ENCODE measurements at regions of chr14 and their contacts with region 1.

Region 1: GRCh38 chr14:24058260-24058950 is 6.6 kb downstream of the CARMIL3 start:
- DNase-seq: peak; percentile 71 to 78
- ATAC-seq: peak; percentile 88 to 94
- H3K4me3 ChIP-seq: no peak overlapping the region
- H3K27ac ChIP-seq: no peak overlapping the region
- H3K4me1 ChIP-seq: no peaks in the 10 kb centered on the region
- CTCF ChIP-seq: peak; percentile 78
- EP300 ChIP-seq: no peak
- POLR2A ChIP-seq: no peak
- RAD21 ChIP-seq: peak; percentile 85 to 95

Region 2: DNA sequence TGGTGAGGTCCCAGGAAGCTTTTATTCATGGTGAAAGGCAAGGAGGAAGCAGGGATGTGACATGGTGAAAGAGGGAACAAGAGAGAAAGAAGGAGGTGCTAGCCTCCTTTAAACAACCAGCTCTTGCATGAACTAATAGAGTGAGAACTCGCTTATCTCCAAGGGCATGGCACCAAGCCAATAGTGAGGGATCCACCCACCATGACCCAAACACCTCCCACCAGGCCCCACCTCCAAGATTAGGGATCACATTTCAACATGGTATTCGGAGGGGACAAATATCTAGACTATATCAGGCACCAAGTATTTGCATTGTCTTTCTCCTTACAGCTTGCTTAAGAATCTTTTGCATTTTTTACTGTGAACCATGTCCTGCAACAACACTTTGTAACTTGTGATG is 196.7 kb before region 1 on chr14:
- CTCF ChIA-PET with region 1: no interaction called
- POLR2A ChIA-PET with region 1: no interaction called
- DNase-seq: peak in 1 of 2 experiments; percentile 10
- ATAC-seq: no peak
- H3K4me3 ChIP-seq: no peak overlapping the region
- H3K27ac ChIP-seq: no peak overlapping the region
- H3K4me1 ChIP-seq: no peaks in the 10 kb centered on the region
- CTCF ChIP-seq: no peak
- EP300 ChIP-seq: no peak
- POLR2A ChIP-seq: no peak
- RAD21 ChIP-seq: no peak

Region 3: DNA sequence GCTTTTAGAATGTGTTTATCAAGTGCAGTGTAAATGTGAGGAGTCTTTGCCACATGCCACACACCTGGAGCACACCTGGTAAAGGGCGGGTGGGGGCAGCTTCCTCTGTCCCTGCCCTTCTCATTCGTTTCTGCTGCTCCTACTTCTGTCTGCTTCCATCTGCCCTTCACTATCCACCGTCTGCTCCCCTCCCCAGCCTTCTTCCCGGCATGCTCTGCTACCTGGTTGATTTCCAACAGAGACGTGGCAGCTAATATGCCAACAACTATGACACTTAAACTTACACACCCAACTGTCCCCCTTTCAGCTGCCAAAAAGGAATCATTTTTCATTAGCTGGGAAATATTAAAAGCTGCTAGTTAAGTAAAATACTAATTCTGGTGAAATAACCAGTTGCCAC is 15.7 kb before region 1 on chr14:
- CTCF ChIA-PET with region 1: interaction called, 20 read pairs
- POLR2A ChIA-PET with region 1: no interaction called
- DNase-seq: no peak
- ATAC-seq: no peak
- H3K4me3 ChIP-seq: no peak overlapping the region
- H3K27ac ChIP-seq: no peak overlapping the region
- H3K4me1 ChIP-seq: no peaks in the 10 kb centered on the region; the same call in 2 of the 3 replicates
- CTCF ChIP-seq: no peak
- EP300 ChIP-seq: no peak
- POLR2A ChIP-seq: no peak
- RAD21 ChIP-seq: no peak

Region 4: DNA sequence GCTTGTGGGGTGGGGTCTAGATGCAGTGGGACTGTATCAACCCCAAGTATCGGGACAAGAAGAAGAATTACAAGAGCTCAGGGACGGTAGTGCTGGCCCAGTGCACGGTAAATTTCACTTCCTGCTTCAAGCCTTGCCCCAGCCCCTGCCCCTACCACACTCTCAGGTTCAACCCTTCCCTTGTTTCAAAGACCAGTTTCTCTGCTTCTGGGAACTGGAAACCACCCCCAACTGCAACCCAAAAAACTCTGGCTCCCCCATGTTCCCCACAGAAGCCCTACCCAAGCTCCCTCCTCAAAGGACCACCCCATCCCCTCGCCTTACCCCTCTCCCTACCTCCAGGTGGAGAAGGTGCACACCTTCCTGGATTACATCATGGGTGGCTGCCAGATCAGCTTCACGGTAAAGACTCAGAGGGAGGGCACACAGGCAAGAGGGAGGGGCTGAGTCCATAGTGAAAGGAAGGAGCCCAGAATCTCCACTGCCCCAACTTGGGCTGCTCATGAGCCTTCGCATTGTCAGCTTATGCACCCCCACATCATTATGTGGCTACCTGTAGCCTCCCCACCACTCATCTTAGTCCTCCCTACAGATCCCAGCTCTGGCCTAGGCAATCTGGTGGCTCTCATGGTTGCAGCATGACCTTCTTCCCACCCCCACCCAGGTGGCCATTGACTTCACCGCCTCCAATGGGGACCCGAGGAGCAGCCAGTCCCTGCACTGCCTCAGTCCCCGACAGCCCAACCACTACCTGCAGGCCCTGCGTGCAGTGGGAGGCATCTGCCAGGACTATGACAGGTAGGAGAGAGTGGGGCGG is 17.3 kb after region 1 on chr14:
- CTCF ChIA-PET with region 1: interaction called, 106 read pairs
- POLR2A ChIA-PET with region 1: interaction called, 6 read pairs
- DNase-seq: no peak
- ATAC-seq: no peak
- H3K4me3 ChIP-seq: no peak overlapping the region
- H3K27ac ChIP-seq: no peak overlapping the region
- H3K4me1 ChIP-seq: peaks cover 7% of the 10 kb centered on the region
- CTCF ChIP-seq: no peak
- EP300 ChIP-seq: no peak
- POLR2A ChIP-seq: no peak
- RAD21 ChIP-seq: no peak

Region 5: GRCh38 chr14:24080888-24081738 is 22.7 kb after region 1 on chr14:
- CTCF ChIA-PET with region 1: interaction called, 106 read pairs
- POLR2A ChIA-PET with region 1: interaction called, 6 read pairs
- DNase-seq: peak; percentile 28 to 67
- ATAC-seq: peak; percentile 88 to 90
- H3K4me3 ChIP-seq: peak overlapping the region; percentile 79
- H3K27ac ChIP-seq: peak overlapping the region; percentile 92 to 93
- H3K4me1 ChIP-seq: peaks cover 15% of the 10 kb centered on the region
- CTCF ChIP-seq: no peak
- EP300 ChIP-seq: no peak
- POLR2A ChIP-seq: peak; percentile 46
- RAD21 ChIP-seq: no peak

Region 6: DNA sequence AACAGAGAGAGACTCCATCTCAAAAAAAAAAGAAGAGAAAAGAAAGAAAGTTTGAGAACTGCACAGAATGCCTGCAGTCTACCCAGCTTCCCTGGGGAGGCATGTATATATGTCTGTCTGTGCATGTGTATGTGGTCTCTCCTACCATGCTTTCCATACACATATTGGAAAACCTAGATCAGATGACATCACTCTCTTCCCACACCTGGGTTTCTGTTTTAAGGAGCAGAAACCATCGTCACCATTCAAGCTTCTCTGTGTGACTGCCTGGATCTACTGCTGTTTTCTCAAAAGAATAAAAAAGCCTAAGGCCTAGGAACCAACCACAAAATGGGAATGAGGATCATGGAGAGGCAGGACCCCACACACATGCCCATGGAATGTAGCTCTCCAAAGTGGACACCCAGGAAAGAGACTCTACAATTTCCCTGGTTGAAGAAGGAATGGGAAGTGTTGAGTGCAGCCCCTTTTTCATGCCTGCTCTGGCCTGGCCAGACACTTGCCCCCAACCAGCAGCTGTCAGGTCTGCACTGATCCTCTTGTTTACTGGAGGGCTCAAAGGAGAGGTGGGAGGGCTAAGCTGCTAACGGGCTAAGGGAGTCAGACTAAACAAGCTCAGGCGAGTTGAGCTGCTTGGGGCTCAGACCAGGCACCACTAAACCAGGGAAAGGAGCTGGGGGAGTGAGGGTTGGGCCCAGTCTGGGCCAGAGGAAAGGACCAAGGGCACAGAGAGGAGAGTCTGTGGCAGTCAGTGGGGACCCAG is 28.0 kb after region 1 on chr14:
- CTCF ChIA-PET with region 1: interaction called, 405 read pairs
- POLR2A ChIA-PET with region 1: interaction called, 11 read pairs
- DNase-seq: no peak
- ATAC-seq: no peak
- H3K4me3 ChIP-seq: no peak overlapping the region
- H3K27ac ChIP-seq: no peak overlapping the region
- H3K4me1 ChIP-seq: peaks cover 5% of the 10 kb centered on the region
- CTCF ChIP-seq: no peak
- EP300 ChIP-seq: no peak
- POLR2A ChIP-seq: no peak
- RAD21 ChIP-seq: no peak

Region 7: DNA sequence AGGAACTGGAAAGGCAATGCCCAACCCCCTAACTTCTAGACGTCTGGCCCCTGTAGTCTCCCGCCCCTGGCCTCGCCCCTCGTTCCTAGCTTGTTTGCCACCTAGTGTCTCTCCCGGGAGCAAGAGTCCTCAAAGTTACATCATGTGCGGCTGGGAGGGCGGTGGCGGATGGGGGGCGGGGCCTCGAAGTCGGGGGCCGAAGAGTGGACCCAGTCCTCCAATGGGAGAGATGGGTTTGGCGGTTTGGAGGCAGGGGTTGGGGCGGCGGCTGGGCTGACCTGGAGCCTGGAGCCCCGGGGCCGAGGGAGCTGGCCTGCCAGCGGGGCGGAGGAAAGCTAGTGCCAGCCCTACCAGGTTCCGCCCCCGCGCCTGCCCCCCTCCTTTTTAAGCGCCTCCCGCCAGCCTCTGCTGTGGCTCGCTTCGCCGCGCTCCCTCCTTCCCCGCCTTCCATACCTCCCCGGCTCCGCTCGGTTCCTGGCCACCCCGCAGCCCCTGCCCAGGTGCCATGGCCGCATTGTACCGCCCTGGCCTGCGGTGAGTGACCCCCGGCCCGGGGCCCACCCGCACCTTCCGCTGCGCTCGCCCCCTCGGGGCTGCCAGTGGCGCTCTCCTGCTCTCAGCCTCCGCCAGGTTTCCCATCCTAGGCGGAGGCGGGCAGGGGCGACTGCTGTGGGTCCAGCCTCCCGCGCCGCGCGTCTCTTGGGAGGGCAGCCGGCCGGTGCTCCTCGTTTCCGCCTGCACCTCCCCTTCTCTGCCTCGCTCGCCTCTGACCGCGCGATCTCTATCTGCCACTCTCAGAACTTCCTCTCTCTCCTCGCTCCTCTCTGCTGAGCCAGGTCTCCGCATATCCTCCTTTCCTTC is 35.7 kb after region 1 on chr14 and contains the start of gene PCK2:
- CTCF ChIA-PET with region 1: interaction called, 405 read pairs
- POLR2A ChIA-PET with region 1: interaction called, 14 read pairs
- DNase-seq: peak; percentile 95 to 97
- ATAC-seq: peak; percentile 93 to 94
- H3K4me3 ChIP-seq: peak within 1 kb of the TSS; percentile 70
- H3K27ac ChIP-seq: peak within 1 kb of the TSS; percentile 95 to 100
- H3K4me1 ChIP-seq: peaks cover 18% of the 10 kb centered on the region
- CTCF ChIP-seq: no peak
- EP300 ChIP-seq: no peak
- POLR2A ChIP-seq: peak; percentile 95
- RAD21 ChIP-seq: no peak
- polyA plus RNA-seq, gene PCK2: 52.1 and 60.2 TPM in 2 replicates